Posterior vena cava (tissue), 2 donors: ENCODE measurements at regions of chr3 and their contacts with region 1.

Region 1: GRCh38 chr3:100254168-100254777 is 6.5 kb upstream of the TBC1D23 start:
- DNase-seq: no peak

Region 2: GRCh38 chr3:99842826-99843589 is 411.3 kb before region 1 on chr3:
- intact Hi-C with region 1: loop called (anchors 5 to 10 kb)
- DNase-seq: no peak

Region 3: GRCh38 chr3:100068826-100069225 is 185.4 kb before region 1 on chr3:
- intact Hi-C with region 1: loop called (anchors 5 to 10 kb)
- DNase-seq: peak; percentile 93